ENCODE measurements at regions of chr11 and their contacts with region 1.

Region 1: GRCh38 chr11:46489661-46490560 is 98.3 kb upstream of the CHRM4 start:
- DNase-seq: no peak

Region 2: DNA sequence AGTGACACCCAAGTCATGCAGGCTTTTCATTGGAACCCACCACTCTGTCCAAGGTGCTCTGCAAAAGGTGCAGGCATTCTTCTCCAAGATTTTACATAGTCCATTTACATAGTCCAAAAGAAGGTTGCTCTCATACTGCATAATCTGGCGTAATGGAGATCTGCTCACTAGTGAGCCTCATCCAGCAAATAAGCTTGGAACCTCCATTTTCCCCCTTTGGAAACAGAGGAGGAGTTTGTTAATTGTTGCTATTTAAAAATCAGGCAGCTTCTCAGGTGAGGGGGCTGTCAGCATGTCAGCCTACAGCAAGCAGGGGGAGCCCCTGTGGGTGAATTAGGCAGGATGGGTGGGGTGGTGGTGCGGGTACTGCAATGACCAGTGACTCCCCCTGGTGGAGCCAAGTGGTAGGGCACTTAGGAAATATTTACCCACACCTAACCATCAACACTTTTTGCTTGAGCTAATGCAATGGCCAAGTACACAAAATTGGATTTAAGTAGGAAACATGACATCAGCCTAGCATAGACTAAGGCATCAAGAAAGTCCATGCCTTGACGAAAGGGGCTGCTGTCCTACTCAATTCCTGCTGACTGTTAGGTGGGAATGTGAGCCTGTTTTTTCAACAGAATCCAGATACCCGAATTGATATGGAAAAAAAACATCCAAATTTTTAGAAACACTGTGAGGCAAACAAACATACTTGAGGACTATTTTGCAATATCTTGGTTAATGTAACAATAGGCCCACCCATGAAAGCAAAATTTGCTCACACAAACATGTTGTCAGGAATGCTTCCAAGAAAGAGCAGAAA is 39.4 kb after region 1 on chr11:
- intact Hi-C with region 1: loop called (anchors 5 kb)
- DNase-seq: peak; percentile 85